H1 (cell line): ENCODE measurements at regions of chr3 and their contacts with region 1.

Region 1: GRCh38 chr3:72641684-72642083 is 206.6 kb downstream of the SHQ1 start:
- DNase-seq: no peak
- H3K4me3 ChIP-seq: no peak overlapping the region
- H3K27ac ChIP-seq: no peak overlapping the region
- H3K4me1 ChIP-seq: no peaks in the 10 kb centered on the region
- H3K27me3 ChIP-seq: no peaks in the 10 kb centered on the region
- CTCF ChIP-seq: no peak
- EP300 ChIP-seq: no peak
- POLR2A ChIP-seq: no peak
- RAD21 ChIP-seq: no peak

Region 2: DNA sequence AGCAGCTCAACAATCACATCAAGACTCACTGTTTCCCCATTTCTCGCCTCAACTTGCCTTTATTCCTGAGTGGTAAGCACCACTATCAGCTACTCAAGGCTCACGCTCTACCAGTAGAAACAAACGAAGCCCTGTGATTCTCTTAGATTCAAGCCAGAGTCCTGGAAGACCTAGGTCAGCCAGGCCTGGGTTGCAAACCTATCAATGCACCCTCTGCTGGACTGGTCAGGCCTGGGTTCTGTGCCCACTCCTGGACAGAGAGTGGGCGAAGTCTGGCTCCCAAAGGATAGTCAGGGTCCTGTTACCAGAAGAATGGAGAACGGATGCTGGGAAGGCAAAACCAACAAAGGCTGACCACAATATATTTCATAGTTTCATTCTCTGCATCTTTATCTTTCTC is 101.8 kb before region 1 on chr3:
- CTCF ChIA-PET with region 1: no interaction called
- POLR2A ChIA-PET with region 1: no interaction called
- DNase-seq: no peak
- H3K4me3 ChIP-seq: no peak overlapping the region
- H3K27ac ChIP-seq: no peak overlapping the region
- H3K4me1 ChIP-seq: peaks cover 4 to 11% (median 7%) of the 10 kb centered on the region in 4 experiments; a peak in 6 of 7 replicates
- H3K27me3 ChIP-seq: no peaks in the 10 kb centered on the region; a peak in 1 of 7 replicates
- CTCF ChIP-seq: no peak
- EP300 ChIP-seq: no peak
- POLR2A ChIP-seq: no peak
- RAD21 ChIP-seq: no peak

Region 3: DNA sequence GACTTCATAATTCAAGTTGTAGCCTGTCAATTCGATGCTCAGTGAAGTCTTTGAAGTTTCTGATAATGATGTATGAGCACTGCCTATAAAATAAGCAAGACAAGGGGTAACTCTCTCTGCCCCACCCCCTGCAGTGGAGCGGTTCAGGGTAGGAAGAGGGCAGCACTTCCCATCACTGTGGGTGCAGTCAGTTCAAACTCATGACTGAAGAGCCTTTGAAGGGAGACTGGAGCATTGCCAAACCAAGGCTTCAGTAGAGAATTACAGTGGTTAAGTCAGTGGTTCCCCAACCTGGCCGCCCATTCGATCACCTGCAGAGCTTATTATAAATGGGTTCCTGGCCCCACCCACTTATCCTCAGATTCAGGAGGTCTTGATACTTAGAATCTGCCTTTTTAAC is 16.0 kb after region 1 on chr3:
- CTCF ChIA-PET with region 1: interaction called, 12 read pairs
- POLR2A ChIA-PET with region 1: interaction called, 3 read pairs
- DNase-seq: no peak
- H3K4me3 ChIP-seq: no peak overlapping the region
- H3K27ac ChIP-seq: no peak overlapping the region
- H3K4me1 ChIP-seq: peaks cover 0 to 2% (median 0%) of the 10 kb centered on the region in 4 experiments; a peak in 1 of 7 replicates
- H3K27me3 ChIP-seq: no peaks in the 10 kb centered on the region; a peak in 1 of 7 replicates
- CTCF ChIP-seq: no peak
- EP300 ChIP-seq: no peak
- POLR2A ChIP-seq: no peak
- RAD21 ChIP-seq: no peak